Activated CD4-positive, alpha-beta memory T cell treated with anti-CD3 and anti-CD28 coated beads, Interleukin-2, amount 10 ng/mL, durations not matched to agents 7 days and 5 days (primary cell): ENCODE measurements at regions of chr12 and their contacts with region 1.

Region 1: GRCh38 chr12:108618079-108618952 is 15.4 kb downstream of the SELPLG start:
- DNase-seq: peak; percentile 75
- H3K4me3 Mint-ChIP-seq: no peak overlapping the region
- H3K27ac Mint-ChIP-seq: peak overlapping the region; percentile 68
- H3K4me1 Mint-ChIP-seq: peaks cover 79% of the 10 kb centered on the region
- H3K27me3 Mint-ChIP-seq: no peaks in the 10 kb centered on the region

Region 2: DNA sequence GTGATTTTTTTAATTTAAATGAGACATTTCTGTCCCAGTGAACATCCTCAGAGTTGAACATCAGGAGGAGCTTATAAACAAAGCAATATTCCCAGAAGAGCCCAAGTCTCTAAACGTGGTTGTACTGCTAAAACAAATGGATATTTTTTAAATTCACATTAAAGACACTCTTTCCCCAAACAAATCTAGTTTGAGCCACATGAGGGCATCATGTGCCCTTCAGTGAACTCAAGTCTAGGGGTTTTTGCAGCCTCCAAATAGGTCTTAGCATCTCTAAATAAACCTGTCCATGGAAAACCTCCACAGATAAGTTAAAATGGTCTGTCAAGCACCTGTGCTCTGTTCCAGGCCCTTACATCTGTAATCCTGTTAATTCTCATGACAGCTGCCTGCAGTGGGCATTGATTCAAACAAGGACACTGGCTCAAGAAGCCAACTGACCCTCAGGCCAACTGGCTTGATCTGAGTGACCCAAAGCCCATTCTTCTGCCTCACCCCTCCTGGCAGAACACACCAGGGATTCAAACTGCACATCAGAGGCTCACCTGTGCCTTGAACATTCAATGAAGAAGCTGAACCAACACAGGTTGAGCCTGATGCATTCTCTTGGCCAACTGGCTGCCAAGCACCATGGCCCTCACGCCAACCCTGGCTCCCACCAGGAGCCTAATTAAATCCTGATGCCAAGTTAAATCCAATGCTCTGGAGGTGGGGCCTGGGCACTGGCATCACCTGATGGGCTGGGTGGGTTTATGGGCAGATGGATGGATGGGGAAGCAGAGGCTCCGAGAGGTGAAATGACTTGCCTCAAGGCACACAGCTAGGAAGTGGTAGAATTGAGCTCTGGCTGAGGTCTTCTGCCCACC is 47.3 kb before region 1 on chr12:
- CTCF ChIA-PET with region 1: interaction called, 86 read pairs
- POLR2A ChIA-PET with region 1: interaction called, 41 read pairs
- DNase-seq: no peak
- H3K4me3 Mint-ChIP-seq: no peak overlapping the region
- H3K27ac Mint-ChIP-seq: peak overlapping the region; percentile 7
- H3K4me1 Mint-ChIP-seq: peaks cover 79% of the 10 kb centered on the region
- H3K27me3 Mint-ChIP-seq: peaks cover 3% of the 10 kb centered on the region

Region 3: DNA sequence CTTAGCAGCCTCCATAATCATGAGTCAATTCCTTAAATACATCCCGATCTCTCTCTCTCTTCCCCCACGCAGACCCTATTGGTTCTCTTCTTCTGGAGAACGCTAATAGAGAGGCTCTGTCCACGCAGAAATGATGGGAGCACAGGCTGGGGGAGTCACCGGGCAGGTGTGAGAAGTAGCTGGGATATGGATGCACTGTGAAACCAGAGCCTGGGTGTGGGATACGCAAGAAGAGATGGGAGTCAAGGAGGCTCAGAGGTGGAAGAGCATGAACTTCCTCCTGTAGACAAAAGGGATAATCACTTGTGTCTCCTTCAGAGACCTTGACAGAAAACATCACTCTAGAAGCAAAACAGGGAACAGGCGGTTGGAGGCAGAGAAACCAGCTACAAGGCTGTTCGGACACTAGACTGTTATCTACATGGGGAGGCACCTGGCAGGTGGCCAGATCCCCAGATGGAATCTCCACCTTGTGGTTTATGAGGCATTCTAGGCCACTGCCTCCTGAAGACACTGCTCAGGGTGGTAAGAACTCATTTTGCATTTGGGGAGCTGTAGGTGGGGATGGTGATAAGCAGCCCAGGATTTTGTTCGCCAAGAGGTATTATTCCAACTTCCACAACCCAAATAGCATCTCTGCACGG is 22.6 kb after region 1 on chr12:
- CTCF ChIA-PET with region 1: interaction called, 215 read pairs
- POLR2A ChIA-PET with region 1: interaction called, 213 read pairs
- DNase-seq: no peak
- H3K4me3 Mint-ChIP-seq: no peak overlapping the region
- H3K27ac Mint-ChIP-seq: no peak overlapping the region
- H3K4me1 Mint-ChIP-seq: peaks cover 45% of the 10 kb centered on the region
- H3K27me3 Mint-ChIP-seq: no peaks in the 10 kb centered on the region

Region 4: DNA sequence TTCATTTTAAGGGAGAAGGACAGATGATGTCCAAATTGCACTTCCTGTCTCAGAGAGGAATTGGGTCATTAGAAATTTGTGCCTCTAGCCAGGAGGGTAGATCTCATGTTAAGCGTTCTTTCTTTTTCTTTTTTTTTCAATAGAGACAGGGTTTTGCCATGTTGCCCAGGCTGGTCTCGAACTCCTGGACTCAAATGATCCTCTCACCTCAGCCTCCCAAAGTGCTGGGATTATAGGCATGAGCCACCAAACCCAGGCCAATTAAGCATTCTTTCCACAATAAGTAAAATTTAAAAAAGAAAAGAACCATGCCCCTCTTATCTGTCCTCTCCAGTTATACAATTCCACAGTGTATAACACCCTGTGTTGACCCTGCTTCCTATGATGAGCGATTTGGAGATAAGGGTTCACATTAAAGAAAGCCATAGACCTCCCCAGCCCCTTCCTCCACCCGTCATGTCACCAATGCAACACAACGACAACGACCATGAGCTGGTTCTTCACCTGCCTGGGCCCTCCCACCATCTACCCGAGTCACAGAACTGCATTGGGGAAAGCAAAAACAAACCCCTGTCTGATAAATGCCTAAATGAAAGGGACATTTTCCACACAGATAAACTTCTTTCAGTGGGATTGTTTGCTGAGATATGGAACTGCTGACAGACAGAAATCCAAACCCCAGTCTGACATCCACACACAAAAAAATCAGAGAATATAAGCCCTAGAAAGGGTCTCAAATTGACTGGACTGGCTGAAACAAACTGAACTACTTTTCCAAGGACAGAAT is 201.8 kb after region 1 on chr12:
- CTCF ChIA-PET with region 1: no interaction called
- POLR2A ChIA-PET with region 1: no interaction called
- DNase-seq: no peak
- H3K4me3 Mint-ChIP-seq: no peak overlapping the region
- H3K27ac Mint-ChIP-seq: no peak overlapping the region
- H3K4me1 Mint-ChIP-seq: peaks cover 44% of the 10 kb centered on the region
- H3K27me3 Mint-ChIP-seq: no peaks in the 10 kb centered on the region